ENCODE measurements at regions of chr12 and their contacts with region 1.

Region 1: DNA sequence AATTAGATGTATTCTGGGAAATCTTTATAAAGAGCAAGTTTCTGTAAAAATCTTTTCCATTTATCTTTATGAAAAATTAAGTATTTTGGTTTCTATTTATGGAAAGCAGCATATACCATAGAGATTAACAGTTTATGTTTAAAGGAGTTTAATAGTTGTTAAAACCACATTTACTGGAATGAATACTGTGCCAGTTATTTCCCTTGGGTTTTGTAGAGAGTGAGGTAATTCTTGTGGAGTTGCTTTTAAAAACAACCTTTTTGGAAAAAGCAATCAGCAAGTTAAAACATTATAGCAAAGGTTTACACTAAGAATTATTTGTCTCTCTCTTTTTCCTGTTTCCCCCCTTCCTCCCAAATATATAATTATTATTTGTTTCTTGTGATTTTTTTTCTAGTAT is 34.9 kb downstream of the AEBP2 start:
- DNase-seq: no peak
- H3K4me3 Mint-ChIP-seq: no peak overlapping the region
- H3K27ac Mint-ChIP-seq: no peak overlapping the region
- H3K4me1 Mint-ChIP-seq: peaks cover 18% of the 10 kb centered on the region
- H3K27me3 Mint-ChIP-seq: no peaks in the 10 kb centered on the region

Region 2: DNA sequence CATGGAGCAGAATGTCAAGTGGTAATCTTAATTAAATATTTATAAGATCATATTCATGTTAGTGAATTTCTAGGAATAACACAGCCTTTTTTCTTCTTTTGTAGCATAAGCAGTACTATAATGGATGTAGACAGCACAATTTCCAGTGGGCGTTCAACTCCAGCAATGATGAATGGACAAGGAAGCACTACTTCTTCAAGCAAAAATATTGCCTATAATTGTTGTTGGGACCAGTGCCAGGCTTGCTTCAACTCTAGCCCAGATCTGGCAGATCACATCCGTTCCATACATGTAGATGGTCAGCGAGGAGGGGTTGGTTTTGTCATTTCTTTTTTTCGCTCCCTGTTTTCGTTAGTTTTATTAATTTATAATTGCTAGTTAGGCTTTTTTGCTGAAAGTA is 11.7 kb before region 1 on chr12:
- intact Hi-C with region 1: loop called (anchors 1 kb)
- DNase-seq: no peak
- H3K4me3 Mint-ChIP-seq: no peak overlapping the region
- H3K27ac Mint-ChIP-seq: no peak overlapping the region
- H3K4me1 Mint-ChIP-seq: peaks cover 40% of the 10 kb centered on the region
- H3K27me3 Mint-ChIP-seq: no peaks in the 10 kb centered on the region

Region 3: DNA sequence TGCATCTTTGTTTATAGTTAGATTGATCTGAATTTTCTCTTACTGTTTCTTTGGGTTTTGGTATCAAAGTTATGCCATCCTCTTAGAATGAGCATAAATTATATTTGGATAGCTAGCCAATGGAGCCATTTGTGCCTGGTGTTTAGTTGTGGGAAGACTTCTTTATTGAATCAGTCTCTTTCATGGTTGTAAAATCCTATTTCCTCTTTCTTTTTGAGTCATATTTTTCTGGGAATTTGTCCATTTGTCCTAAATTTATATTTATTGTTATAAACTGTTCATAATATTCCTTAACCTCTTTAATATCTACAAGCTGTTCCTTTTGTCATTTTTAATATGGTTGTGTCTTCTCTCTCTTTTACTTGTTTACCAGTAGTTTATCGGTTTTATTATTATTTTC is 427.7 kb after region 1 on chr12:
- intact Hi-C with region 1: no loop called
- DNase-seq: no peak
- H3K4me3 Mint-ChIP-seq: no peak overlapping the region
- H3K27ac Mint-ChIP-seq: no peak overlapping the region
- H3K4me1 Mint-ChIP-seq: no peaks in the 10 kb centered on the region
- H3K27me3 Mint-ChIP-seq: no peaks in the 10 kb centered on the region

Measured in activated T-helper 1 cell treated with anti-CD3 and anti-CD28 coated beads, Interleukin-12 subunit alpha, Interleukin-12 subunit beta, Interleukin-2, Interleukin-4 antibody, amounts not matched to agents 30 ng/mL and 10 ng/mL and 1 ng/mL, durations not matched to agents 14 hours and 24 hours and 36 hours (primary cell).